Natural killer cell (primary cell): ENCODE measurements at regions of chr16 and their contacts with region 1.

Region 1: DNA sequence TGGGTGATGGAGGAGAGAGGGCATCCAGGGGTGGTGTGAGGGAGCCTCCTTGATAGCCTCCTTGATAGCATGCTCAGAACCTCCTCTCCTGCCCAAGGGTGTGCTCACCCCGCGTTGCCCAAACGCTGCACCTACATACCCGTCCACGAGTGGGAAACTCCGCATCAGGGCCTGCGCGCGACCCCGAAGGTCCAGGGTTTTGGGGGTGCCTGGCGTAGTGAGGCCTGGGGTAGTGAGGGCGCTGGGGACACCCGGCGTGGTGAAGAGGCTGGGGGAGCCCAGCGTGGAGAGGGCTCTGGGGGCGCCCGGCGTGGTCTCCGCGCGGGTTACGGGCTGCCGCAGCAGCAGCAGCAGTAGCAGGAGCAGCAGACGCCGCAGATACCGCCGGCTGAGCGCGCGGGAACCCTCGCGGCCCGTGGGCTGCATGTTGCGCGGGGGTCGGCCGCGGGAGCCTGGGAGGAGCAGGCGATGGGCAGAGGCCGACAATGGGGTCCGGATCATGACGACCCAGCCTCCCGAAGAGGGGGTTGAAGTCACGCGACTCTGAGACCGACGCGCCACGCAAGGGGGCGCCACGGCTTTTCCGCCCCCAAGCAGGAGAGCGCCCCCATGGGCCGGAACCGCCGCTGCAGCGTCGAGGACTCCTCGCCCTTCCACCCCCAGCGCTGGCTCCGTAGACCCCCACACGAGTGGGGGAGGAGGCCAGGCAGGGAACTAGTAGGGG is at the start of gene DPEP3:
- DNase-seq: no peak
- ATAC-seq: no peak
- H3K4me3 ChIP-seq: no peak within 1 kb of the TSS
- H3K4me3 Mint-ChIP-seq: no peak within 1 kb of the TSS
- H3K27ac ChIP-seq: no peak within 1 kb of the TSS
- H3K27ac Mint-ChIP-seq: no peak within 1 kb of the TSS
- H3K4me1 ChIP-seq: peaks cover 21% of the 10 kb centered on the region
- H3K4me1 Mint-ChIP-seq: peaks cover 15% of the 10 kb centered on the region in 2 donors
- H3K27me3 ChIP-seq: no peaks in the 10 kb centered on the region
- H3K27me3 Mint-ChIP-seq: no peaks in the 10 kb centered on the region
- CTCF ChIP-seq: peak; percentile 15
- total RNA-seq, gene DPEP3: 0.53 to 1.00 (median 0.96) TPM

Region 2: DNA sequence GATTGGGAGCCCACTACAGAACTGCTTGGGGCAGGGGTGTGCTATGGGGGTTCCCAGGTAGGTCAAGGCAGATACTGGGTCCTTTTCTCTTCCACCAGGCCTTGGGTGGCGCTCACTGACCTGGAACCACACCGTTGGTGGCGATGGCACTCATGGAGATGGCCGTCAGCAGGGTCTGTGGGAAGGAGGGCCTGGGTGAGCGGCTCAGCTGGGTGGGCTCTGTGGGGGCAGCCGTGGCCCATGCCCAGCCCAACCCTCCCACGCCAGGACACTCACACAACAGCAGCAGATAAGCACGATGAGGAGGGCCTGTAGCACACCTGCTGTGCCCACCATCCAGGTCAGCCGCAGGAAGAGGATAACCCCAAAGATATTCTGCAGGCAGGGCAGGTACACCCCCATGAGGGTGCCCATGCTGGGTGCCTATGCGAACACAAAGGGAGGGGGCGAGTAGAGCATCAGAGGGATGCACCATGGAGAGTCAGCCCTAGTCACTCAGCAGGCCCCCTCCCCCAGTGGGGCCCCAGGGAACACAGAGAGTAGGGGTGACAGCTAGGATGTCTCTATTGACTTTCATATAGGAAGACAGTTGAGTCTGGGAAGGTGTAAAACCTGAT is 22.4 kb before region 1 on chr16:
- intact Hi-C with region 1: no loop called
- DNase-seq: no peak
- ATAC-seq: no peak
- H3K4me3 ChIP-seq: no peak overlapping the region
- H3K4me3 Mint-ChIP-seq: no peak overlapping the region
- H3K27ac ChIP-seq: no peak overlapping the region
- H3K27ac Mint-ChIP-seq: no peak overlapping the region
- H3K4me1 ChIP-seq: no peaks in the 10 kb centered on the region
- H3K4me1 Mint-ChIP-seq: peaks cover 1% of the 10 kb centered on the region in 2 donors
- H3K27me3 ChIP-seq: no peaks in the 10 kb centered on the region
- H3K27me3 Mint-ChIP-seq: no peaks in the 10 kb centered on the region
- CTCF ChIP-seq: no peak

Region 3: GRCh38 chr16:67968400-67969253 is 11.5 kb before region 1 on chr16 and contains the start of gene SLC12A4:
- intact Hi-C with region 1: loop called (anchors 2 kb)
- DNase-seq: peak; percentile 86 to 91
- ATAC-seq: peak; percentile 90 to 95 (median 91)
- H3K4me3 ChIP-seq: peak within 1 kb of the TSS; percentile 80
- H3K4me3 Mint-ChIP-seq: peak within 1 kb of the TSS; percentile 96
- H3K27ac ChIP-seq: peak within 1 kb of the TSS; percentile 68
- H3K27ac Mint-ChIP-seq: peak within 1 kb of the TSS; percentile 77 to 89
- H3K4me1 ChIP-seq: peaks cover 27% of the 10 kb centered on the region
- H3K4me1 Mint-ChIP-seq: peaks cover 17 to 22% of the 10 kb centered on the region in 2 donors
- H3K27me3 ChIP-seq: no peaks in the 10 kb centered on the region
- H3K27me3 Mint-ChIP-seq: no peaks in the 10 kb centered on the region
- CTCF ChIP-seq: no peak
- total RNA-seq, gene SLC12A4: 30.0 to 47.0 (median 30.5) TPM